Activated CD8-positive, alpha-beta T cell treated with anti-CD3 and anti-CD28 coated beads for 36 hours (primary cell): ENCODE measurements at regions of chr6 and their contacts with region 1.

Region 1: GRCh38 chr6:111873178-111874024 is at the start of gene FYN:
- DNase-seq: peak; percentile 100
- ATAC-seq: peak; percentile 86
- H3K4me3 Mint-ChIP-seq: peak within 1 kb of the TSS; percentile 98
- H3K27ac Mint-ChIP-seq: peak within 1 kb of the TSS; percentile 98
- H3K4me1 Mint-ChIP-seq: peaks cover 30% of the 10 kb centered on the region
- H3K27me3 Mint-ChIP-seq: no peaks in the 10 kb centered on the region
- CTCF ChIP-seq: peak; percentile 45
- total RNA-seq, gene FYN: 384 to 386 TPM

Region 2: DNA sequence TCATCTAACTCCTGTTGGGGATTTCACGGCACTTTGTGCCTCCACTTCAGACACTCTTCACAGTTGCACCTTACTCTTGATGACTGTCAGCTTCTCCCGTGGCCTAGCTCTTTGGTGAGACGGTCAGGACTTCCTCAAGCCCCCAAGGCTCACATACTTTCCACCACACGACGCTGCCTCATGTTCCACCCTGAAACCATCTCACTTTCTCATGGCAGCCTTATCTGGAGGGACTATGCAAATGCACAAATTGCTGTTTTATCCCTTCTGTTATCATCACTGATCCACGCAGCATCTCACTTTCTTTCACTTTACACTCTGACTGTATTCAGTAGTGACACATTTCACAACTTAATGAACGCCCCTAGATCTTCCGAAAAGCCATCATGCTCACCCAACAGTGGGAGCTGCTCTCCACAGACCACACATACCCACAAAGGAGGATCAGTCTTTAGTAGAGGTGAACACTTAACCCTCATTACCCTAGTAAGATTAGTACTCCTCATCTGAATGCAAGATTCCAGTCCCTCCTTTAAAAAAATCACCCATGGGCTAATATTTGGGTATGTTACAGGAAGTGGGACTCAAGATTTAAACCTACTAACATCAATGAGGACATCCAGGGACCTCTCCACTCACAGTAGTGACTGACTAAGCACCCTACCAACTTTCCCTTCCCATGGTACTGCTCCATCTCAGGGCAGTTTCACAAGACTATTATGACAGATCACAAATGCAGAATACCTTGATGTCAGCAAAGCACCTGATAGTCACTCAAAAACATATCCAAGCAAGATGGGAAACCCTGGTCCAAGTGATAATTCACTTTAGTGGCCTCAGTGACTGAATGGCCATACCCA is 35.5 kb before region 1 on chr6:
- CTCF ChIA-PET with region 1: interaction called, 3 read pairs
- POLR2A ChIA-PET with region 1: interaction called, 5 read pairs
- intact Hi-C with region 1: loop called (anchors 2 kb)
- DNase-seq: peak; percentile 81
- ATAC-seq: peak; percentile 77
- H3K4me3 Mint-ChIP-seq: peak overlapping the region; percentile 67
- H3K27ac Mint-ChIP-seq: no peak overlapping the region
- H3K4me1 Mint-ChIP-seq: peaks cover 73% of the 10 kb centered on the region
- H3K27me3 Mint-ChIP-seq: no peaks in the 10 kb centered on the region
- CTCF ChIP-seq: no peak

Region 3: DNA sequence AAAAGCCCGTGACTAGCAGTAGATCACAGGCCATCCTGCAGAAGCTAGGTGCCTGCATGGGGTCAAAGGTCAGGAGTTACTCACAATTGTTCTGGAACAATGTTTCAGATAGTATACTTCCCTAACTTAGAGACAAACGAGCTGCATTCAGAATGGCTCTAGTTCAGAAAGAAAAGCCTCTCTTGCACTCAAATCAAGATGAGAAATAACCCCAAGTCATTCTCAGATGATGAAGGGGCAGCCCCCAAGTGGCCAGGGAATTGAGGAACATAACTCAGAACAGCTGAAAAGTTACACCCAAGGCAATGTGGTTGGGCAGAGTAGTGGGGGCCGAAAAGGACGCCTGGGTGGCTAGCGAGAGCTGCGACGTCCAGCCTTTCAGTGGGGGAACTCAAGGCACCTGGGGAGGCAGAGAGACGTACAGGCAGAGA is 27.9 kb before region 1 on chr6:
- CTCF ChIA-PET with region 1: interaction called, 9 read pairs
- POLR2A ChIA-PET with region 1: interaction called, 18 read pairs
- intact Hi-C with region 1: no loop called
- DNase-seq: peak; percentile 56
- ATAC-seq: peak; percentile 10
- H3K4me3 Mint-ChIP-seq: no peak overlapping the region
- H3K27ac Mint-ChIP-seq: no peak overlapping the region
- H3K4me1 Mint-ChIP-seq: peaks cover 17% of the 10 kb centered on the region
- H3K27me3 Mint-ChIP-seq: no peaks in the 10 kb centered on the region
- CTCF ChIP-seq: no peak

Region 4: GRCh38 chr6:111861431-111861885 is 11.9 kb before region 1 on chr6:
- CTCF ChIA-PET with region 1: interaction called, 3 read pairs
- POLR2A ChIA-PET with region 1: interaction called, 10 read pairs
- intact Hi-C with region 1: no loop called
- DNase-seq: no peak
- ATAC-seq: peak; percentile 41
- H3K4me3 Mint-ChIP-seq: peak overlapping the region; percentile 35
- H3K27ac Mint-ChIP-seq: peak overlapping the region; percentile 91
- H3K4me1 Mint-ChIP-seq: peaks cover 99% of the 10 kb centered on the region
- H3K27me3 Mint-ChIP-seq: no peaks in the 10 kb centered on the region
- CTCF ChIP-seq: no peak

Region 5: GRCh38 chr6:111916747-111917146 is 43.3 kb after region 1 on chr6:
- CTCF ChIA-PET with region 1: no interaction called
- POLR2A ChIA-PET with region 1: no interaction called
- intact Hi-C with region 1: no loop called
- DNase-seq: no peak
- ATAC-seq: no peak
- H3K4me3 Mint-ChIP-seq: no peak overlapping the region
- H3K27ac Mint-ChIP-seq: no peak overlapping the region
- H3K4me1 Mint-ChIP-seq: peaks cover 3% of the 10 kb centered on the region
- H3K27me3 Mint-ChIP-seq: no peaks in the 10 kb centered on the region
- CTCF ChIP-seq: no peak

Region 6: GRCh38 chr6:111973118-111973761 is 99.8 kb after region 1 on chr6:
- CTCF ChIA-PET with region 1: interaction called, 4 read pairs
- POLR2A ChIA-PET with region 1: interaction called, 18 read pairs
- intact Hi-C with region 1: loop called (anchors 5 kb)
- DNase-seq: peak; percentile 75
- ATAC-seq: peak; percentile 85
- H3K4me3 Mint-ChIP-seq: peak overlapping the region; percentile 63
- H3K27ac Mint-ChIP-seq: peak overlapping the region; percentile 93
- H3K4me1 Mint-ChIP-seq: peaks cover 64% of the 10 kb centered on the region
- H3K27me3 Mint-ChIP-seq: no peaks in the 10 kb centered on the region
- CTCF ChIP-seq: no peak